GM18951 (cell line): ENCODE measurements at regions of chr4 and their contacts with region 1.

Region 1: GRCh38 chr4:88514557-88515511 is 8.7 kb downstream of the PYURF start:
- POLR2A ChIP-seq: no peak

Region 2: DNA sequence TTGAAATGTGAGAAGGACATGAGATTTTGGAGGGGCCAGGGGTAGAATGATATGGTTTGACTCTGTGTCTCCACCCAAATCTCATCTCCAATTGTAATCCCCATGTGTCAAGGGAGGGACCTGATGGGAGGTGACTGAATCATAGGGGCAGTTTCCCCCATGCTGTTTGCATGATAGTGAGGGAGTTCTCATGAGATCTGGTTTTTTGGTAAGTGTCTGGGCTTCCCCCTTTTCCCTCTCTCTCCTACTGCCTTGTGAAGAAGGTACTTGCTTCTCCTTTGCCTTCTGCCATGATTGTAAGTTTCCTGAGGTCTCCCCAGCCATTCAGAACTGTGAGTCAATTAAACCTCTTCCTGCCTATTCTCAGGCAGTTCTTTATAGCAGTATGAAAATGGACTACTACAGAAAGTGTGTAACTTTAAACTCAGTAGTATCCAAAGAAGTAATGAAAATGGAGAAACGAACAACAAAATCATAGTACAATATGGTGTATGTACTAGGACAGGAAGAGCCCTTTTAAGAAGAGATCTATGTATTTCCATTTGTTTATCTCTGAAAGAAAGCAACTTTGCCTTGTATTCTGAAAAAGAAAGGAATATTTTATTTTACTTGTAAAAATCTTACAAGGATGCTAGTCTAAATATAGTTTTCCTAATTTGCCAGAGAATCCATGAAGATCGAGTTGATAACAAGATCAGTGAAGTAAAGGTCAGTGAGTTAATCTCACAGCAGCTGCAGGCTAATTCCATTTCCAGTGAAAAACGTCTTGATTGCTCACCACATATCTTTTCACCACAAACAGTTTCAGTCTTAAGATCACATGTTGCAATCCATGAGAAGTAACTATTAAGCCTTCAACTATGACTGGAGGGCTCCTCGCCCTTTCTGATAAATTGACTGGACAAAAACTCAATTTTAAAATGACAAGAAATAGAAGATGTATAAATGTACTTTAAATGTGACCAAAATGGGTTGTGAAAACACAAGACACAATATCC is 486.9 kb before region 1 on chr4:
- in situ Hi-C with region 1: loop called (anchors 10 kb)
- POLR2A ChIP-seq: no peak

Region 3: GRCh38 chr4:88211473-88212252 is 303.2 kb before region 1 on chr4:
- in situ Hi-C with region 1: loop called (anchors 5 kb)
- POLR2A ChIP-seq: no peak

Region 4: DNA sequence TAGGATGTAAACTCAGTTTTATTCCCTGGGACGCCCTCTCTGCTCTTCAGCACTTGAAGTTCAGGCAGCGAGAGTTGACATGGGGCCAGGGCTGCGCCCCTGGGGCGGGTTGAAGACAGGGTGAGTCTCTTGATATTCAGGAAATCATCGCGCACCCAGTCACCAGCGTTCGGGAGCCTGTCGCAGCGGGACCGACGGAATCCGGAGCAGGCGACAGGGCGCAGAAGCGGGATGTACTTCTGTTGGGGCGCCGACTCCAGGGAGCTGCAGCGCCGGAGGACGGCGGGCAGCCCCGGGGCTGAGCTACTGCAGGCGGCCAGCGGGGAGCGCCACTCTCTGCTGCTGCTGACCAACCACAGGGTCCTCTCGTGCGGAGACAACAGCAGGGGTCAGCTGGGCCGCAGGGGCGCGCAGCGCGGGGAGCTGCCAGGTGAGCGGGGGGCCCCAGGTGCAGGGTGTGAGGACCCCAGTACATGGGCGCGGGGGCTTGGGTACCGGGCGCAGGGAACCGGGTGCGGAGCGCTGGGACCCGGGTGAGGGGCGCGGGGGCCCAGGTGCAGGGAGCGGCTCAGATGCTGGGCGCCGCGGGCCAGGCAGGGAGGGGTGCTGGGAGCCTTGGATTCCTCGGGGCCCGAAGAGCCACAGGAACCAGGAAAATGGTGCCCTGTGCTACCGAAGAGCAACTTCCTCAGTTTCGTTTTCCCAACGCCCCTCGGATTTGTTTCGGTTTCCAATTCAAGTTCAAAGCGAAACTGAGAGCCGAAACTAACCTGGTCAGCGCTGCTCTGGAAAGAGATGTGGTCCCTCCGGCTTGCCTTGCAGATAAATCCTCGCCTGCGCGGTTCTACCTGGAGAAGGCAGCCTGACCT is 135.9 kb before region 1 on chr4 and contains the start of gene HERC6:
- in situ Hi-C with region 1: loop called (anchors 10 kb)
- POLR2A ChIP-seq: peak; percentile 55